ENCODE measurements at regions of chr7 and their contacts with region 1.

Region 1: GRCh38 chr7:158710651-158711102 is 6.1 kb upstream of the NCAPG2 start:
- DNase-seq: peak; percentile 43 to 56
- ATAC-seq: peak; percentile 68 to 89 (median 85)
- H3K4me3 ChIP-seq: no peak overlapping the region
- H3K4me3 Mint-ChIP-seq: peak overlapping the region; percentile 76
- H3K27ac ChIP-seq: peak overlapping the region; percentile 59
- H3K27ac Mint-ChIP-seq: peak overlapping the region; percentile 76 to 78
- H3K4me1 ChIP-seq: peaks cover 40% of the 10 kb centered on the region
- H3K4me1 Mint-ChIP-seq: peaks cover 22 to 29% of the 10 kb centered on the region in 2 donors
- H3K27me3 ChIP-seq: no peaks in the 10 kb centered on the region
- H3K27me3 Mint-ChIP-seq: no peaks in the 10 kb centered on the region
- CTCF ChIP-seq: no peak

Region 2: GRCh38 chr7:158754746-158755444 is 44.2 kb after region 1 on chr7:
- intact Hi-C with region 1: no loop called
- DNase-seq: no peak
- ATAC-seq: no peak
- H3K4me3 ChIP-seq: no peak overlapping the region
- H3K4me3 Mint-ChIP-seq: no peak overlapping the region
- H3K27ac ChIP-seq: no peak overlapping the region
- H3K27ac Mint-ChIP-seq: peak overlapping the region in 1 of 2 donors; percentile 63
- H3K4me1 ChIP-seq: no peaks in the 10 kb centered on the region
- H3K4me1 Mint-ChIP-seq: peaks cover 11 to 12% of the 10 kb centered on the region in 2 donors
- H3K27me3 ChIP-seq: no peaks in the 10 kb centered on the region
- H3K27me3 Mint-ChIP-seq: no peaks in the 10 kb centered on the region
- CTCF ChIP-seq: no peak

Region 3: GRCh38 chr7:158824028-158824427 is 113.4 kb after region 1 on chr7:
- intact Hi-C with region 1: loop called (anchors 5 kb)
- DNase-seq: peak; percentile 82 to 92
- ATAC-seq: peak; percentile 64 to 87 (median 86)
- H3K4me3 ChIP-seq: peak overlapping the region; percentile 6
- H3K4me3 Mint-ChIP-seq: peak overlapping the region; percentile 79
- H3K27ac ChIP-seq: peak overlapping the region; percentile 66
- H3K27ac Mint-ChIP-seq: peak overlapping the region; percentile 88 to 89
- H3K4me1 ChIP-seq: peaks cover 55% of the 10 kb centered on the region
- H3K4me1 Mint-ChIP-seq: peaks cover 55% of the 10 kb centered on the region in 2 donors
- H3K27me3 ChIP-seq: no peaks in the 10 kb centered on the region
- H3K27me3 Mint-ChIP-seq: no peaks in the 10 kb centered on the region
- CTCF ChIP-seq: no peak

Measured in natural killer cell (primary cell).